ENCODE measurements at regions of chr3 and their contacts with region 1.

Region 1: DNA sequence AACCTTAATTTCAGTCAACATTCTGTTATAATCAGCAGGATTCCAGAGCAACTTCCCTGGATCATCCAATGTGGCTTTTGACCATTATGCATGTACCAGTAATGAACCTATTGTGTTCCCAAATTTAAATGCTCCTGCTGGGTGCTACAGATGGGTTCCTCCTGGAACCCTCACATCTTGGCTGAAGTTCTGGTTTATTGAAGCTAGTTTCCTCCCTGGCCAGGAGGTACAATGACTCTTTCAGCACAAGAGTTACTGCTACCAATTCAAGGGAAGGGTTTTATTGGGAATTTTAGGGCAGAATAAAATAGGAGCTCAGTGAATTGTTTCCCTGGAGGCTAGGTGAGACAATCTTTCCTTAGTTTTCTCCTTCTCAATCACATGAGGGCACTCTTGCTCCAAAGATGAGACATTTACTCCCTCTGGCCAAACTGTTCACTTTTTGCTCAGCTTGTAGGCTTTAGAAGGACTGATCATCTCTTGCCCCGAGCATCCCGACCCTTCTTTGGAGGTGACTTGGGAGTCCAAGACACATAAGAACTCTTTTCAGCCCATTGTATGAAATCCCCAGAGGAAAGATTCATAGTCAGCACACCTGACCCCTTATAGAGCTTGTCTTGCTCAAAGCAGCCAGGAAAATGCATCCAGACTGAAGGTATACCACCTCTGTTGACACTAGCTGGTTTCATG is 8.8 kb upstream of the NPHP3 start:
- DNase-seq: no peak
- H3K4me3 ChIP-seq: no peak overlapping the region
- H3K27ac ChIP-seq: no peak overlapping the region
- H3K4me1 ChIP-seq: no peaks in the 10 kb centered on the region; a peak in 1 of 7 replicates
- H3K27me3 ChIP-seq: no peaks in the 10 kb centered on the region
- CTCF ChIP-seq: peak in 2 of 3 experiments; percentile 70 to 74; a peak in 3 of 4 replicates
- EP300 ChIP-seq: no peak
- POLR2A ChIP-seq: no peak
- RAD21 ChIP-seq: peak; percentile 95

Region 2: DNA sequence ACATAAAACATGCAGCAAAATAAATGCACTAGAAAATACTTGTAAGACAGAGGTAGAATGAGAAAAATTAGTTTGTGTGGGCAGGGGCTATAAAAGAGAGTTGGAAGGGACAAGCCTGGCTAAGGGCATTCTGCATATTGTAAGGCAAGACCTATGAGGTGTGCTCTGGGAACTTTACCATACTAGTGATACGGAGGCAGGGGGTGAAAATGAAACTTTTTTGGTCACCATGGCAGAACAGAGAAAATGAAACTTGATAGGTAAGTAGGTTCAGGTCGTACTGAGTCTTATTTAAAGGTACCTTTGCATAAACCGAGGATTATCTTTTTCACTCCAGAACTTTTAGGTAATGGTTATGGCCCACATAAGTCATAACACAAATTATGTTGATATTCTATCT is 208.7 kb before region 1 on chr3:
- CTCF ChIA-PET with region 1: no interaction called
- POLR2A ChIA-PET with region 1: no interaction called
- DNase-seq: no peak
- H3K4me3 ChIP-seq: no peak overlapping the region
- H3K27ac ChIP-seq: no peak overlapping the region
- H3K4me1 ChIP-seq: no peaks in the 10 kb centered on the region
- H3K27me3 ChIP-seq: no peaks in the 10 kb centered on the region
- CTCF ChIP-seq: no peak
- EP300 ChIP-seq: no peak
- POLR2A ChIP-seq: no peak
- RAD21 ChIP-seq: no peak

Region 3: GRCh38 chr3:132629928-132630327 is 101.1 kb before region 1 on chr3:
- CTCF ChIA-PET with region 1: no interaction called
- POLR2A ChIA-PET with region 1: no interaction called
- DNase-seq: no peak
- H3K4me3 ChIP-seq: no peak overlapping the region
- H3K27ac ChIP-seq: no peak overlapping the region
- H3K4me1 ChIP-seq: no peaks in the 10 kb centered on the region
- H3K27me3 ChIP-seq: no peaks in the 10 kb centered on the region
- CTCF ChIP-seq: no peak
- EP300 ChIP-seq: no peak
- POLR2A ChIP-seq: no peak
- RAD21 ChIP-seq: no peak

Region 4: DNA sequence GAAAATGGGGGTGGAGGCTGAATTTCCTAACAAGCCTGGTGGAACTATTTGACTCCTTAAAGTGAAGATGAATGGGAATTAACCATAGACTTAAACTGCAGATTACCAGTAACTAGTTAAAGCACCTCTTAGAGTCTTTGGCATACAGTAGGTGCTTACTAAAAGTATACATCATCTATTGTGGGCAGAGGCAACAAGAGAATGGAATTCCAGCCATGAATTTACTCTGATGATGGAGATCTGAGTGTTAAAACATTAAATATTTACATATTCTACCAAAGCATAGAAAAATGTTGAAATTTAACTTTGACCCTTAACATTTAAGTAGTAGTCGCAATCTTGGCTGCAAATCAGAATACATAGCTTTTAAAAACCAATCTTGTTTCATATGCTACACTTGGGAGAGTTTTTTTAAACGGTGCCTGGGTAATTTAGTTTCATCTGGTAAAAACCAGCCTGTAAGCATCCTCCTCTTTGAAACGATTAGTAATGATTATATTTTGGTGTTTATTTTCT is 65.7 kb before region 1 on chr3:
- CTCF ChIA-PET with region 1: no interaction called
- POLR2A ChIA-PET with region 1: no interaction called
- DNase-seq: no peak
- H3K4me3 ChIP-seq: no peak overlapping the region
- H3K27ac ChIP-seq: no peak overlapping the region
- H3K4me1 ChIP-seq: no peaks in the 10 kb centered on the region
- H3K27me3 ChIP-seq: no peaks in the 10 kb centered on the region
- CTCF ChIP-seq: no peak
- EP300 ChIP-seq: no peak
- POLR2A ChIP-seq: no peak
- RAD21 ChIP-seq: no peak

Region 5: GRCh38 chr3:132749786-132750185 is 18.8 kb after region 1 on chr3:
- CTCF ChIA-PET with region 1: interaction called, 16 read pairs
- POLR2A ChIA-PET with region 1: no interaction called
- DNase-seq: no peak
- H3K4me3 ChIP-seq: no peak overlapping the region
- H3K27ac ChIP-seq: no peak overlapping the region
- H3K4me1 ChIP-seq: no peaks in the 10 kb centered on the region
- H3K27me3 ChIP-seq: no peaks in the 10 kb centered on the region
- CTCF ChIP-seq: no peak
- EP300 ChIP-seq: no peak
- POLR2A ChIP-seq: no peak
- RAD21 ChIP-seq: no peak

Region 6: GRCh38 chr3:132789959-132790358 is 58.9 kb after region 1 on chr3:
- CTCF ChIA-PET with region 1: interaction called, 11 read pairs
- POLR2A ChIA-PET with region 1: no interaction called
- DNase-seq: no peak
- H3K4me3 ChIP-seq: no peak overlapping the region
- H3K27ac ChIP-seq: no peak overlapping the region
- H3K4me1 ChIP-seq: no peaks in the 10 kb centered on the region
- H3K27me3 ChIP-seq: no peaks in the 10 kb centered on the region
- CTCF ChIP-seq: no peak
- EP300 ChIP-seq: no peak
- POLR2A ChIP-seq: no peak
- RAD21 ChIP-seq: no peak

Region 7: GRCh38 chr3:133384331-133385027 is 653.4 kb after region 1 on chr3:
- CTCF ChIA-PET with region 1: interaction called, 31 read pairs
- POLR2A ChIA-PET with region 1: no interaction called
- DNase-seq: peak; percentile 58 to 80
- H3K4me3 ChIP-seq: no peak overlapping the region
- H3K27ac ChIP-seq: no peak overlapping the region
- H3K4me1 ChIP-seq: no peaks in the 10 kb centered on the region; a peak in 1 of 7 replicates
- H3K27me3 ChIP-seq: no peaks in the 10 kb centered on the region
- CTCF ChIP-seq: peak; percentile 86 to 97 (median 93)
- EP300 ChIP-seq: no peak
- POLR2A ChIP-seq: no peak
- RAD21 ChIP-seq: peak; percentile 97 to 98

Region 8: GRCh38 chr3:133393691-133394474 is 662.8 kb after region 1 on chr3:
- CTCF ChIA-PET with region 1: interaction called, 12 read pairs
- POLR2A ChIA-PET with region 1: no interaction called
- DNase-seq: no peak
- H3K4me3 ChIP-seq: no peak overlapping the region
- H3K27ac ChIP-seq: no peak overlapping the region
- H3K4me1 ChIP-seq: no peaks in the 10 kb centered on the region
- H3K27me3 ChIP-seq: no peaks in the 10 kb centered on the region
- CTCF ChIP-seq: no peak
- EP300 ChIP-seq: no peak
- POLR2A ChIP-seq: no peak
- RAD21 ChIP-seq: no peak

Region 9: DNA sequence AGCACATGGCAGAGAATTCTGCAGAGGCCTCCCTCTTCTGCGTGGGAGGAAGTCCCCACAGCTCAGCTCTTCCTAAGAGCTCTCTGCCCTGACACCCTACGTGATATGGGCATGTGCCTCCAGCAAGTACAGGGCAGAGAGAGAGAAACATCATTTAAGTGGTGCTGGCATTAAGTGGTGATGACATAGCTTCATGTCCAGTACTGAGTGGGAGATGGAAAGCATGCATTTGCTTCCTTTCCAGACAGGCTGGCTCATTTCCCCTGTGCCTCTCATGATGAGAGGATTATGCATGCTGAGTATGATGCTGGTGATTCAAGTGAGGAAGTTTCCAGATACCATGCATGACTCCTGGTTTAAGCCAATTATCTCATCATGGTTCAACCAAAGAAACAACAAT is 695.7 kb after region 1 on chr3:
- CTCF ChIA-PET with region 1: interaction called, 16 read pairs
- POLR2A ChIA-PET with region 1: interaction called, 4 read pairs
- DNase-seq: no peak
- H3K4me3 ChIP-seq: no peak overlapping the region
- H3K27ac ChIP-seq: no peak overlapping the region
- H3K4me1 ChIP-seq: no peaks in the 10 kb centered on the region
- H3K27me3 ChIP-seq: no peaks in the 10 kb centered on the region
- CTCF ChIP-seq: no peak
- EP300 ChIP-seq: no peak
- POLR2A ChIP-seq: no peak
- RAD21 ChIP-seq: no peak

Measured in H1 (cell line).